ENCODE measurements at regions of chr18 and their contacts with region 1.

Region 1: DNA sequence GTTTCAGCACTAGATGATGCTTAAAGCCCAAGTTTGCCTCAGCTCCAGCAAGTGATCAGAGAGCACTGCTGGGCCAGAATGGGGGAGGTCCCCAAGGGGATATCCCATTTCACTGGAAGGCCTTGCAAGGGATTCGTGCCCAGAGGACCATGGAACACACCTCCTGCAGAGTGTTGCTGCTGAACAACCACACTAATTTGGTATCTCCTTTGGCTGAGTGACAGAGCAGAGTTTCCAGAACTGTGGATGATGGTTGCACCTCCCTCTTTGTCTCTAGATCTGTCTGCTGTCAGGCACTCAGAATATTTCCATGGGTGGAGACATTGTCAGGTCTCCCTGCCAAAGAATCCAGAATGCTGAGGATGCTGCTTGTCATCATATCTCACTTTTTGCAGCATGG is 484.8 kb upstream of the NETO1 start:
- DNase-seq: no peak

Region 2: DNA sequence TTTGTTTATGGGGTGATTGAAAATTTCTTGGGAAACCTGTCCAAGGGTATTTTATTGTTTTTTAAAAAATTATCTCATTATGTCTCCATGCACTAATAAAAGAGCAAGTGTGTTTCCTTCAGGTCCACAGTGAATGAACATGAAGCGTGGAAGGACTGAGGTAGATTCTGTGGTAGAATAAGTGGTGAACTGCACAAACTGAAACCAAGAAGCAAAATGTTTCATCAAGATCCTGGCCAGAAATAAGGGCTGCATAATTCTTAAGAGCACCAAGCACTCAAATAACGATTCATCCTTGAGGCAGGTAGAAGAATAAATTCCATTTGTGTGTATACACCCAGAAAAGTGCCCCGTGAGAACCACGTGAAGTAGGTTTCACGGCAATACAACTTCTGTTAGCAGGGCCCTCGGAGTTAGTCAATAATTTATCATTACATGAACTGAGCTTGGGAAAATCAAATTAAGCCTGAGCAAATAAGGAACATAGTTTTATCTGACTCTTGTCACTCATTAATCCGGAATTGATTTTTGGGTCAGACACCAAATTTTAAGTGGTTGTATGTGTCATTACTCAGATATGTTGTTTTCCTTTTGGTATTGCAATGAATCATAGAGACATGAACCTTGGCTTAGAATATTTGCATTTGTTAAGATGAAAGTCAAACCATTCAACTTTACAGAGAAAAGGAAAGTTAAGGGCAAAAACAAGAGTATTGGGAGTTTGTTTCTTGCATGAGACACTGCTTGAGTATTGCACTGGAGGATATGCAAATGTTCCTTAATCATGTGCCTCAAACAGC is 12.2 kb before region 1 on chr18:
- intact Hi-C with region 1: loop called in 1 of 2 experiments (anchors 1 kb)
- DNase-seq: no peak

Measured in posterior vena cava (tissue), 2 donors.